ENCODE measurements at regions of chr12 and their contacts with region 1.

Region 1: GRCh38 chr12:47837190-47838171 is 17.8 kb upstream of the HDAC7 start:
- DNase-seq: peak; percentile 79
- H3K4me3 ChIP-seq: no peak overlapping the region
- H3K27ac ChIP-seq: no peak overlapping the region
- H3K4me1 ChIP-seq: no peaks in the 10 kb centered on the region
- H3K27me3 ChIP-seq: no peaks in the 10 kb centered on the region
- CTCF ChIP-seq: peak; percentile 87 to 95 (median 91)
- POLR2A ChIP-seq: no peak

Region 2: GRCh38 chr12:47715393-47715876 is 122.0 kb before region 1 on chr12:
- intact Hi-C with region 1: loop called (anchors 10 kb)
- DNase-seq: peak; percentile 83 to 87
- H3K4me3 ChIP-seq: peak overlapping the region in 1 of 2 donors; percentile 20
- H3K27ac ChIP-seq: peak overlapping the region; percentile 86 to 93
- H3K4me1 ChIP-seq: peaks cover 3 to 5% of the 10 kb centered on the region in 2 donors
- H3K27me3 ChIP-seq: no peaks in the 10 kb centered on the region
- CTCF ChIP-seq: peak; percentile 69 to 91 (median 80)
- POLR2A ChIP-seq: no peak

Region 3: DNA sequence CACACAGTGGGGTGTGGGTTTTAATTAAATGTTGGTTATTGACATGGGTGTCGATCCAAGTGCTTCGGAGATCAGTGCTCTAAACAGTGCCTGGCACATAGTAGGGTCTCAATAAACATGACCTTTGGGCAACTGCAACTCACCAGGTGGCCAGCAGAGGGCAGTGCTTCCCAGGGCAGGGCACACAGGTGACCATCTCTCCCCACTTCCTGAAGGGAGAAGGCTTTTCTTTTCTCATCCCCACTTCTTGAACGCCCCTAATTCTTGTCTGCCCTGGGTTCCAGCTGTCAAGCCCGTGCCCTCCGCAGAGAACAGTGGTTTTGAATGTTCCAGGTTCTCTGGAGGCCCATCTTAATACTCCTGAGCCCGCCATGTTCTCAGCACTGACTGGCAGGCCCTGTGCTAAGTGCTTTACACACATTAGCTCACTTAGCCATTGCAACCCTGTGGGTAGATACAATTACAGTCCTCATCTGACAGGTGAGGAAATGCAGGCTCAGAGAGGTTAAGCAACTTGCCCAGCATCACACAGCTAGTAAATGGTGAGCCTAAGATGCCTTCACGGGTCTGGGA is 95.1 kb before region 1 on chr12:
- intact Hi-C with region 1: loop called (anchors 10 kb)
- DNase-seq: peak; percentile 53 to 65
- H3K4me3 ChIP-seq: no peak overlapping the region
- H3K27ac ChIP-seq: no peak overlapping the region
- H3K4me1 ChIP-seq: peaks cover 0 to 6% of the 10 kb centered on the region in 2 donors
- H3K27me3 ChIP-seq: no peaks in the 10 kb centered on the region
- CTCF ChIP-seq: peak; percentile 88 to 95 (median 93)
- POLR2A ChIP-seq: no peak

Region 4: DNA sequence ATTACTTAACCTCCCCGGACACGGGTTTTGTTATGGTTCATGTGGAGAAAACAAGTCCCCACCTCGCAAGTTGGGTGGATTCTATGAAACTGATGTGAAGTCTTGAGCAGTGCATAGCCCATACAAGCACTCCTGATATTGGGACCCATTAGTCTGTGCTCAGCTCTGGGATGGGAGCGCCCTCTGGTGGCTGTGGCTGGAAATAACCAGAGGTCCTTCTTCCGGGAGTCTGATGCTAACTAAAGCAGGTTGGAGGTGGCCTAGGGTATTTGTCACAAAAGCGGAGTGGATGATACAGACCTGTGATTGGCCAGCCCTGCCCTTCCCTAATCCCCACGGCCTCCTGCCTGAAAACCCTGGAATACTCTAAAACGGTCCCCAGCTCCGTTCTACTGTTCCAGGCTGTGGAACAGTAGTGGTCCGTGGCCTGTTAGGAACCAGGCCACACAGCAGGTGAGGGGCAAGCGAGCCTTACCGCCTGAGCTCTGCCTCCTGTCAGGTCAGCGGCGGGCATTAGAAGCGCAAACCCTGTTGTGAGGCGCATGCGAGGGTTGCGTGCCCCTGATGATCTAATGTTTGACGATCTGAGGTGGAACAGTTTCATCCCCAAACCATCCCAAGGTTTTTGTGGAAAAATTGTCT is 58.1 kb before region 1 on chr12:
- intact Hi-C with region 1: loop called (anchors 10 kb)
- DNase-seq: peak; percentile 91
- H3K4me3 ChIP-seq: no peak overlapping the region
- H3K27ac ChIP-seq: peak overlapping the region in 1 of 2 donors; percentile 34
- H3K4me1 ChIP-seq: peaks cover 0 to 5% of the 10 kb centered on the region in 2 donors
- H3K27me3 ChIP-seq: no peaks in the 10 kb centered on the region
- CTCF ChIP-seq: peak; percentile 94 to 96 (median 94)
- POLR2A ChIP-seq: no peak

Region 5: DNA sequence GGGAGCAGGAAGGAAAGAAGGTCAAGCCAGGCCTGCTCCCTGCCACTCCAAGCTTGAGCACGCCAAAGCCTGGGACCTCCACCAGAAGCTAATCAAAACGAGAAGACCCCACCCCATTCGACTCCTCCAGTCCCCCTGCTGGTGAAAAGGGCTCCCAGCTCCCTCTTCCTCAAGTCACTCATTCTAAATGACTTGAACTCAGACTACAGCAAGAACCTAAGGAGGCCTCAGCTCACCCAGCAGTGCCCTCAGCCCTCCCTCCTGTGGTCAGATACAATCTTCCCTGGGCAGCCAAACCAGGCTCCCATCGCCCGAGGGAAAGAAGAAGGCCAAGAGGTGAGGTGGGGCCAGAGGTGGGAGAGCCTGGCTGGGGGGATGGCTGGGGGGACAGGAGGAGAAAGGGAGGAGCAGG is 35.2 kb before region 1 on chr12:
- intact Hi-C with region 1: loop called (anchors 5 kb)
- DNase-seq: no peak
- H3K4me3 ChIP-seq: no peak overlapping the region
- H3K27ac ChIP-seq: peak overlapping the region; percentile 52
- H3K4me1 ChIP-seq: peaks cover 16 to 80% of the 10 kb centered on the region in 2 donors
- H3K27me3 ChIP-seq: no peaks in the 10 kb centered on the region
- CTCF ChIP-seq: no peak
- POLR2A ChIP-seq: no peak

Measured in uterus (tissue), 4 donors.